ENCODE measurements at regions of chr5 and their contacts with region 1.

Region 1: DNA sequence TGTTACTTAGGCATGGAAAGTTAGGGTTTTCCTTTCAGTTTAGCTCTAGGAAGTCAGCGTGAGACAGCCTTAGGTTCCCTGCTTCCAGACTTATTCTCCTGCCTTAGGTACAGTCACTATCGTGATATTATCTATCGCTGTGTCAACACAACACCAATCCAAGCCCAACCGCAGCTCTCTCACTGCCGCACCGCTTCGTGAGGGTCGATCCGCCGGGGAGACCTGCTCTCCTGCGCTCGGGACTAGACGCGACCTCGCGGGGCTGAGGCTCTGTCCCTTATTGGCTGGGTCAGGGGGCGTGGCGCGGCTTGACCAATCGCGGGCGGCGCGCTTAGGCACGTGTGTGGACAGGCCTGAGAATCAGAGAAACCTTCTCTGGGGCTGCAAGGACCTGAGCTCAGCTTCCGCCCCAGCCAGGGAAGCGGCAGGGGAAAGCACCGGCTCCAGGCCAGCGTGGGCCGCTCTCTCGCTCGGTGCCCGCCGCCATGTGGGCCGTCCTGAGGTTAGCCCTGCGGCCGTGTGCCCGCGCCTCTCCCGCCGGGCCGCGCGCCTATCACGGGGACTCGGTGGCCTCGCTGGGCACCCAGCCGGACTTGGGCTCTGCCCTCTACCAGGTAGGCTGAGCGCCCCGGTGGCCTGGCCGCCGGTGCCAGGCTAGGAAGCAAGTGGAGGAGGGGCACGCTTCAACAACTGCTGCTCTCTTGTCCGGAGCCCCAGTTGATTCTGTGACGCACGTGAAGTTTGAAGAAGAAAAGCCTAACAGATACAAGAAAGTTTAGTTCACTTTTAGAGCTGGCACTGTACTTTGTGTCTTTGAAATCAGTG is at the start of gene MCCC2:
- DNase-seq: peak; percentile 91 to 98 (median 94)
- ATAC-seq: peak; percentile 98
- H3K4me3 ChIP-seq: peak within 1 kb of the TSS; percentile 89
- H3K4me3 Mint-ChIP-seq: peak within 1 kb of the TSS; percentile 98
- H3K27ac ChIP-seq: peak within 1 kb of the TSS; percentile 87 to 90
- H3K27ac Mint-ChIP-seq: peak within 1 kb of the TSS; percentile 89
- H3K4me1 ChIP-seq: peaks cover 33% of the 10 kb centered on the region
- H3K4me1 Mint-ChIP-seq: peaks cover 45% of the 10 kb centered on the region
- H3K27me3 ChIP-seq: no peaks in the 10 kb centered on the region
- H3K27me3 Mint-ChIP-seq: no peaks in the 10 kb centered on the region
- CTCF ChIP-seq: no peak
- total RNA-seq, gene MCCC2: 16.3 to 18.7 TPM

Region 2: GRCh38 chr5:71455427-71456361 is 131.5 kb before region 1 on chr5 and contains the start of gene BDP1:
- CTCF ChIA-PET with region 1: no interaction called
- POLR2A ChIA-PET with region 1: interaction called, 5 read pairs
- intact Hi-C with region 1: loop called in 1 of 2 experiments (anchors 5 kb)
- DNase-seq: peak; percentile 88 to 99 (median 98)
- ATAC-seq: peak; percentile 88
- H3K4me3 ChIP-seq: peak within 1 kb of the TSS; percentile 69
- H3K4me3 Mint-ChIP-seq: peak within 1 kb of the TSS; percentile 99
- H3K27ac ChIP-seq: peak within 1 kb of the TSS; percentile 89 to 93
- H3K27ac Mint-ChIP-seq: peak within 1 kb of the TSS; percentile 94
- H3K4me1 ChIP-seq: peaks cover 11% of the 10 kb centered on the region
- H3K4me1 Mint-ChIP-seq: peaks cover 31% of the 10 kb centered on the region
- H3K27me3 ChIP-seq: peaks cover 2 to 8% of the 10 kb centered on the region in 2 experiments
- H3K27me3 Mint-ChIP-seq: peaks cover 15% of the 10 kb centered on the region
- CTCF ChIP-seq: peak; percentile 49
- total RNA-seq, gene BDP1: 31.3 to 31.9 TPM

Region 3: DNA sequence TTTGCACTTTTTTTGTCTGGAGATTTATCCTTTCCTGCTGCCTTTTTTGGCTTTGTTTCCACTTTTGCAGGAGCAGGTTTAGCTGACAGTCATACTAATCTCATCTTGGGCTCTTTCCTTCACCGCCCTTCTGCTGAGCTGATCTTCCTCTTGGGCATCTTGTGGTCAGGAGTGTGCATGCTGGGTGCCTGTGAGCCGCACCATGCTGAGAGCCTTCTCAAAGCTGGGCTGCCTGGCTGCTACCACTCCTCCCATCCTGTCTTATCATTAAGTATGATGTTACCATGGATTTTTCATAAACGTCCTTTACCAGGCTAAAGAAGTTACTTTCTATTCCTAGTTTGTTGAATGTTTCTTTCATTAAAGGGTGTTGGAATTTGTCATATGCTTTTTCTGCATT is 49.5 kb before region 1 on chr5:
- CTCF ChIA-PET with region 1: no interaction called
- POLR2A ChIA-PET with region 1: interaction called, 3 read pairs
- intact Hi-C with region 1: loop called in 1 of 2 experiments (anchors 10 kb)
- DNase-seq: no peak
- ATAC-seq: no peak
- H3K4me3 ChIP-seq: no peak overlapping the region
- H3K4me3 Mint-ChIP-seq: no peak overlapping the region
- H3K27ac ChIP-seq: no peak overlapping the region
- H3K27ac Mint-ChIP-seq: no peak overlapping the region
- H3K4me1 ChIP-seq: no peaks in the 10 kb centered on the region
- H3K4me1 Mint-ChIP-seq: peaks cover 12% of the 10 kb centered on the region
- H3K27me3 ChIP-seq: no peaks in the 10 kb centered on the region
- H3K27me3 Mint-ChIP-seq: no peaks in the 10 kb centered on the region
- CTCF ChIP-seq: no peak

Region 4: GRCh38 chr5:71601222-71602041 is 14.3 kb after region 1 on chr5:
- CTCF ChIA-PET with region 1: interaction called, 55 read pairs
- POLR2A ChIA-PET with region 1: interaction called, 28 read pairs
- intact Hi-C with region 1: loop called in 1 of 2 experiments (anchors 1 kb)
- DNase-seq: peak; percentile 24 to 85 (median 66)
- ATAC-seq: peak; percentile 85
- H3K4me3 ChIP-seq: no peak overlapping the region
- H3K4me3 Mint-ChIP-seq: no peak overlapping the region
- H3K27ac ChIP-seq: peak overlapping the region; percentile 26 to 67
- H3K27ac Mint-ChIP-seq: peak overlapping the region; percentile 71
- H3K4me1 ChIP-seq: peaks cover 19% of the 10 kb centered on the region
- H3K4me1 Mint-ChIP-seq: peaks cover 24% of the 10 kb centered on the region
- H3K27me3 ChIP-seq: no peaks in the 10 kb centered on the region
- H3K27me3 Mint-ChIP-seq: no peaks in the 10 kb centered on the region
- CTCF ChIP-seq: peak; percentile 75

Region 5: DNA sequence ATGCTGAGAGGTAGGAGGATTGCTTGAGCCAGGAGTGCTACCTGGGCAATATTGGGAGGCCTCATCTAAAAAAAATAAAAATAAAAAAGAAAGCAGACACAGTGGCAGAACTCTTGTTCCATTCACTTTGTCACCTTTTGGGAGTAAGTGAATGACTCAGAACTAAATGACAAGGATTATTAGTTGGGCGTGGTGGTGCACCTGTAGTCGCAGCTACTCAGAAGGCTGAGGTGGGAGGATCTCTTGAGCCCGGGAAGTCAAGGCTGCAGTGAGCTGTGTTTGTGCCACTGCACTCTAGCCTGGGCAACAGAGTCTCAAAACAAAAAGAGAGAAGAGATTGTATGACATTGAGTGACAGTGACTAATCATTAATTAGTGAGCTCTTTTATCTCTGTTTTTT is 34.1 kb after region 1 on chr5:
- CTCF ChIA-PET with region 1: no interaction called
- POLR2A ChIA-PET with region 1: no interaction called
- intact Hi-C with region 1: no loop called
- DNase-seq: no peak
- ATAC-seq: no peak
- H3K4me3 ChIP-seq: no peak overlapping the region
- H3K4me3 Mint-ChIP-seq: no peak overlapping the region
- H3K27ac ChIP-seq: no peak overlapping the region
- H3K27ac Mint-ChIP-seq: no peak overlapping the region
- H3K4me1 ChIP-seq: no peaks in the 10 kb centered on the region
- H3K4me1 Mint-ChIP-seq: peaks cover 13% of the 10 kb centered on the region
- H3K27me3 ChIP-seq: no peaks in the 10 kb centered on the region
- H3K27me3 Mint-ChIP-seq: no peaks in the 10 kb centered on the region
- CTCF ChIP-seq: no peak

Region 6: DNA sequence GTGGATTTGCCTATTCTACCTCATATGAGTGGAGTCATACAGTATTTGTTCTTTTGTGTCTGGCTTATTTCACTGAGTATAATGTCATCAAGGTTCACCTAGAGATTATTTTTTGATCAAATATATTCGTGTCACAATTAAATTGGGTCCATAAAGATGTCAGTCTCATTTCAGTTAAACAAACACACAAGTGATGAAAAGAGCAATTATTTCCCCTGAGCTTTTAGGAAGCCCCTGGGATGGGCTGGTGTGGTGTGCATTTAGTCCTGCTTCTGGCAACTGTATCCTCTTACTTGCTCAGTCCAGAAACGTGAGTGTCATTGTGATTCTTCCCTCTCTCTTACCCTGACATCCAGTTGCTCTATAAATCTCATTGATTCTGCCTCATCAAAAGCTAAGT is 79.2 kb after region 1 on chr5:
- CTCF ChIA-PET with region 1: no interaction called
- POLR2A ChIA-PET with region 1: no interaction called
- intact Hi-C with region 1: no loop called
- DNase-seq: no peak
- ATAC-seq: no peak
- H3K4me3 ChIP-seq: no peak overlapping the region
- H3K4me3 Mint-ChIP-seq: no peak overlapping the region
- H3K27ac ChIP-seq: no peak overlapping the region
- H3K27ac Mint-ChIP-seq: no peak overlapping the region
- H3K4me1 ChIP-seq: no peaks in the 10 kb centered on the region
- H3K4me1 Mint-ChIP-seq: no peaks in the 10 kb centered on the region
- H3K27me3 ChIP-seq: no peaks in the 10 kb centered on the region
- H3K27me3 Mint-ChIP-seq: no peaks in the 10 kb centered on the region
- CTCF ChIP-seq: no peak

Region 7: GRCh38 chr5:71905834-71906711 is 318.9 kb after region 1 on chr5:
- CTCF ChIA-PET with region 1: no interaction called
- POLR2A ChIA-PET with region 1: no interaction called
- intact Hi-C with region 1: no loop called
- DNase-seq: no peak
- ATAC-seq: no peak
- H3K4me3 ChIP-seq: no peak overlapping the region
- H3K4me3 Mint-ChIP-seq: no peak overlapping the region
- H3K27ac ChIP-seq: no peak overlapping the region
- H3K27ac Mint-ChIP-seq: no peak overlapping the region
- H3K4me1 ChIP-seq: no peaks in the 10 kb centered on the region
- H3K4me1 Mint-ChIP-seq: no peaks in the 10 kb centered on the region
- H3K27me3 ChIP-seq: peaks cover 5 to 6% of the 10 kb centered on the region in 2 experiments
- H3K27me3 Mint-ChIP-seq: peaks cover 10% of the 10 kb centered on the region
- CTCF ChIP-seq: no peak

Measured in CD4-positive, alpha-beta T cell (primary cell).